Activated naive CD4-positive, alpha-beta T cell treated with anti-CD3 and anti-CD28 coated beads for 36 hours (primary cell): ENCODE measurements at regions of chr18 and their contacts with region 1.

Region 1: GRCh38 chr18:111292-112014 is 46.9 kb upstream of the USP14 start:
- DNase-seq: peak; percentile 69
- H3K4me3 Mint-ChIP-seq: peak overlapping the region; percentile 84
- H3K27ac Mint-ChIP-seq: peak overlapping the region; percentile 96
- H3K4me1 Mint-ChIP-seq: peaks cover 16% of the 10 kb centered on the region
- H3K27me3 Mint-ChIP-seq: no peaks in the 10 kb centered on the region

Region 2: GRCh38 chr18:267688-268552 is 156.5 kb after region 1 on chr18 and contains the start of gene THOC1:
- CTCF ChIA-PET with region 1: no interaction called
- intact Hi-C with region 1: loop called (anchors 2 kb)
- DNase-seq: peak; percentile 97
- H3K4me3 Mint-ChIP-seq: peak within 1 kb of the TSS; percentile 95
- H3K27ac Mint-ChIP-seq: peak within 1 kb of the TSS; percentile 99
- H3K4me1 Mint-ChIP-seq: peaks cover 39% of the 10 kb centered on the region
- H3K27me3 Mint-ChIP-seq: no peaks in the 10 kb centered on the region
- total RNA-seq, gene THOC1: 63.5 to 66.2 TPM

Region 3: DNA sequence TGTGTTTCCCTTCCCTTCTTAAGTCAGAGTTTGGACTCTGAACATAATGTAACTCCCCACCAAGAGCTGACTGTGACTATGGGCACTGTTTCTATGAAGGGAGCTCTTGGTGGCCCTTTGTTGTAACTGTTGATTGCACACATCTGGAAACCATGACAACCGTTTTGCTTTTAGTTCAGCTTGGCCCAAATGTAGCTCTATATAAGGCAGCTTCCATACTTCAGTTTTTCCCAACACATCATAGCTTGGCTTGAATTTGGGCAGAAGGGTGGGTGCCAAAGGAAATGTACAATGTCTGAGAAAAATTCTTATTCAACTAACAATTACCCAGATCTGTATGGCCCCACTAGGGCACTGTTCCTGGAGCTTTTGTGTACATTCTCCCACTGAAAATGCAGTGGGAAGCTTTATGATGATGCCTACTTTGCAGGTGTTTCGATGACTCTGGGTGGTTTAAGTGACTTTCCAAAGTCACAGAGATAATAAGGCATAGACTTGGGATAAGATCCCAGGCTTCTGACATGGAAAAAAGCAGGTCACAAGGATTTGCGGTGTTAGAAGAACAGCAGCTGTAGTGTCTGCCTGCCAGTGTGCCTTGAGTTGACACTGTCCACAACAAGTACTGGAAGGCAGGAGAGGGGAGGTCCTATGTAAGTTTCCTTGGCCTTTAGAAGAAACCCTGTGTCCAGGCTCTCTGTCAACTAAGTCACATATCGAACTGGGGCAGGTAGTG is 466.4 kb after region 1 on chr18:
- CTCF ChIA-PET with region 1: no interaction called
- intact Hi-C with region 1: no loop called
- DNase-seq: no peak
- H3K4me3 Mint-ChIP-seq: no peak overlapping the region
- H3K27ac Mint-ChIP-seq: no peak overlapping the region
- H3K4me1 Mint-ChIP-seq: no peaks in the 10 kb centered on the region
- H3K27me3 Mint-ChIP-seq: peaks cover 13% of the 10 kb centered on the region

Region 4: DNA sequence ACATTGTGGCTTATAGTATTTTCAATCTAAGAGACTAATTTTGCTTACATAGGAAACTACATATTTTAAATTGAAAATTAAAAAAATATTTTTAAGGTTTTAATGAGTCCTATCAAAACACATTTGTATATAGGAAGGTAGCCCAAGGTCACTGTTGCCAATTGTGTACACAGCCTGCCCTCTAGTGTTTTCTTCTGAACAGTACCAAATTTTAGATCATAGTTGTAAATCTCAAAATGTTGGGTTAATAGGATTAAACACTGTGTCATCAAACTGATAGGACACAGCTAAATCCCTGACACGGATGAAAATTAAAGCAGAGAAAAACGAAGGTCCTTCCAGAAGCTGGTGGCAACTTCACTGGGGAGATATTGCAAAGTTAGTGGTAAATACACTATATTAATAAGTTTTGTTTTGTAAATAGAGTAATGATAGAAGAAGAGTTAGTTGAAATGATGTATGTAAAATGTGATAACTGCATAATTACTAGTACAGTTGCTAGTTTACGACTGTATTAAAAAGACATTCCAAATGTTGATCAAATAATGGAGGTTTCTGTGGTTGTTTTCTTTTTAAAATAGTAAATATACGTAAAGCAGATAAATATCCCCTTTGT is 505.0 kb after region 1 on chr18:
- CTCF ChIA-PET with region 1: no interaction called
- intact Hi-C with region 1: loop called (anchors 2 kb)
- DNase-seq: peak; percentile 8
- H3K4me3 Mint-ChIP-seq: no peak overlapping the region
- H3K27ac Mint-ChIP-seq: no peak overlapping the region
- H3K4me1 Mint-ChIP-seq: no peaks in the 10 kb centered on the region
- H3K27me3 Mint-ChIP-seq: no peaks in the 10 kb centered on the region